ENCODE measurements at regions of chr11 and their contacts with region 1.

Region 1: DNA sequence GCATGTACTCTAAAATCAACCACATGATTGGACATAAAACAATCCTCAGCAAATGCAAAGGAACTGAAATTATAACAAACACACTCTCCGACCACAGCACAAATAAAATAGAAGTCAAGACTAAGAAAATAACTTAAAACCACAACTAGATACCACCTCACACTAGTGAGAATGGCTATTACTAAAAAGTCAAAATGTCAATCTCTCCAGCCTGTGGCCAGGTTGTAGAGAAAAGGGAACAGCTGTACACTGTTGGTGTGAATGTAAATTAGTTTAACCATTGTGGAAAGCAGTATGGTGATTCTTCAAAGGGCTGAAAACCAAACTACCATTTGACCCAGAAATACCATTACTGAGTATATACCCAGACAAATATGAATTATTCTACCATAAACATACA is 1025.7 kb upstream of the TENM4 start:
- DNase-seq: no peak
- H3K4me3 ChIP-seq: no peak overlapping the region
- H3K27ac ChIP-seq: no peak overlapping the region
- H3K4me1 ChIP-seq: no peaks in the 10 kb centered on the region
- H3K27me3 ChIP-seq: no peaks in the 10 kb centered on the region
- CTCF ChIP-seq: no peak
- POLR2A ChIP-seq: no peak

Region 2: GRCh38 chr11:80424012-80424695 is 42.4 kb before region 1 on chr11:
- intact Hi-C with region 1: loop called (anchors 2 kb)
- DNase-seq: no peak
- H3K4me3 ChIP-seq: no peak overlapping the region
- H3K27ac ChIP-seq: no peak overlapping the region
- H3K4me1 ChIP-seq: no peaks in the 10 kb centered on the region
- H3K27me3 ChIP-seq: no peaks in the 10 kb centered on the region
- CTCF ChIP-seq: no peak
- POLR2A ChIP-seq: no peak

Region 3: GRCh38 chr11:80477178-80477577 is 10.6 kb after region 1 on chr11:
- intact Hi-C with region 1: no loop called
- DNase-seq: no peak
- H3K4me3 ChIP-seq: no peak overlapping the region
- H3K27ac ChIP-seq: no peak overlapping the region
- H3K4me1 ChIP-seq: no peaks in the 10 kb centered on the region
- H3K27me3 ChIP-seq: no peaks in the 10 kb centered on the region
- CTCF ChIP-seq: no peak
- POLR2A ChIP-seq: no peak

Region 4: GRCh38 chr11:82003671-82004515 is 1537.3 kb after region 1 on chr11:
- intact Hi-C with region 1: no loop called
- DNase-seq: no peak
- H3K4me3 ChIP-seq: no peak overlapping the region
- H3K27ac ChIP-seq: no peak overlapping the region
- H3K4me1 ChIP-seq: no peaks in the 10 kb centered on the region
- H3K27me3 ChIP-seq: no peaks in the 10 kb centered on the region
- CTCF ChIP-seq: no peak
- POLR2A ChIP-seq: no peak

Measured in breast epithelium (tissue), 4 donors.